ENCODE measurements at regions of chr18 and their contacts with region 1.

Region 1: DNA sequence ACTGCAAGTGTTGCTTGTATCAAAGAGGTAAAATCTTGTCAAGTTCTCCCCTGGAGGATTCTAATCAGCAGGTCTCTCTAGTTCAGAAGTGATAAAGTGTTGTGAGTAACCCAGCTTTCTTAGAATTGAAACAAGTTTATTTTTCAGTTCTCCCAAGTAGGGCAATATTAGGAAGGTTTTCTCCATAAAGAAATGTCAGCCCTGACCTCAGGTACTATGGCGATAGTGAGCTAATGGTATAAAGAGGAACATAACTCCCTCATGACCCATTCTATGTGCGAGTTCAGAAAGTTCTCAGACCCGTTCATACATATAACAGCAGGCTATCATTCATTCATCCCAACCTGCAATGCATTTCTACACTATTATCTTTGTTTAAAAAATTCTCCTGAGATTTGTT is 421.1 kb upstream of the SETBP1 start:
- DNase-seq: no peak
- H3K4me3 ChIP-seq: no peak overlapping the region
- H3K27ac ChIP-seq: no peak overlapping the region
- H3K4me1 ChIP-seq: no peaks in the 10 kb centered on the region
- H3K27me3 ChIP-seq: no peaks in the 10 kb centered on the region
- CTCF ChIP-seq: no peak
- POLR2A ChIP-seq: no peak

Region 2: DNA sequence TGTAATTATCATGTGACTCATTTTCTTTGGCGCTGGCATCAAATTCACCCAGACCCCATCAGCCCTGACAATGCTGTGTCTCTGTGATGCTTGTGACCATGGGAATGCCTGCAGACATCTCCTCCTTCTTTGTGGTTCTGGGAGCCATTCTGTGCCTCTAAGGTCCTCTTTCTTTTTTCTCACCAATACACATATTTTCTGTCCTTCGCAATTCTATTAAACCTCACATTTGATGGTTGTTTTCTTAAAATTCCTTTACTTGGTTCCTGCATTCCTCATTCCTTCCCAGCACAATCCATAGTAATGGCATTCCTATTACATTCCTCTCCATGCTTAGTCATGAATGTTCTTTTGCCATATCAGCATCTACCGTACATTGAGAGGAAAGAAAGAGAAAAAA is 1929.3 kb before region 1 on chr18:
- intact Hi-C with region 1: no loop called
- DNase-seq: no peak
- H3K4me3 ChIP-seq: no peak overlapping the region
- H3K27ac ChIP-seq: no peak overlapping the region
- H3K4me1 ChIP-seq: no peaks in the 10 kb centered on the region
- H3K27me3 ChIP-seq: no peaks in the 10 kb centered on the region
- CTCF ChIP-seq: no peak
- POLR2A ChIP-seq: no peak

Region 3: DNA sequence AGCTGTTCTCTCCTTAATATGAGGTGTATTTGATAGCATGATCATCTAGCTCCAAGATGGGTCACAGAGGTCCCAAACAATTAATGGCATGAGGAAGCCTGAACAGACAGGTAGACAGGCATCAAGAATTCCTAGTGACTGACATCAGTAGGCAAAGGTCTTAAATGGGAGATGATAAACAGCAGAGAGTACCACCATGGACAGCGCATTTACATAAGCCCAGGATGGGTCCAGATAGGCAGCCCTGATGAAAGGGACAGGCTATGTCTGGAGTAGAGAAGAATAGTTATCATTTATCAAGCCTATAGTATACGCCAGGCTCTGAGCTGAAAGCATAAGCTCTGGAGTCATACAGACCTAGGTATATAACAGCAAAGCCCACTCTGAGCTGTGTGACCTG is 13.6 kb before region 1 on chr18:
- intact Hi-C with region 1: loop called (anchors 2 kb)
- DNase-seq: no peak
- H3K4me3 ChIP-seq: no peak overlapping the region
- H3K27ac ChIP-seq: no peak overlapping the region
- H3K4me1 ChIP-seq: no peaks in the 10 kb centered on the region
- H3K27me3 ChIP-seq: no peaks in the 10 kb centered on the region
- CTCF ChIP-seq: no peak
- POLR2A ChIP-seq: no peak

Region 4: GRCh38 chr18:45291621-45292615 is 1032.3 kb after region 1 on chr18:
- intact Hi-C with region 1: loop called (anchors 5 kb)
- DNase-seq: no peak
- H3K4me3 ChIP-seq: peak overlapping the region in 1 of 3 donors; percentile 18
- H3K27ac ChIP-seq: no peak overlapping the region
- H3K4me1 ChIP-seq: no peaks in the 10 kb centered on the region
- H3K27me3 ChIP-seq: no peaks in the 10 kb centered on the region
- CTCF ChIP-seq: no peak
- POLR2A ChIP-seq: no peak

Measured in breast epithelium (tissue), 4 donors.